Motor neuron (in vitro differentiated cells): ENCODE measurements at regions of chr14 and their contacts with region 1.

Region 1: GRCh38 chr14:68795597-68796417 is 2.9 kb upstream of the ZFP36L1 start:
- ATAC-seq: peak; percentile 24 to 80 (median 76)
- H3K4me3 ChIP-seq: peak overlapping the region; percentile 36 to 49 (median 44)
- H3K27ac ChIP-seq: peak overlapping the region; percentile 82 to 86
- H3K4me1 ChIP-seq: peaks cover 11 to 26% of the 10 kb centered on the region in 2 donors

Region 2: GRCh38 chr14:68268197-68268596 is 527.6 kb before region 1 on chr14:
- in situ Hi-C with region 1: loop called in 1 of 9 experiments (anchors 25 kb)
- ATAC-seq: no peak
- H3K4me3 ChIP-seq: no peak overlapping the region
- H3K27ac ChIP-seq: no peak overlapping the region
- H3K4me1 ChIP-seq: peaks cover 8 to 10% of the 10 kb centered on the region in 2 donors

Region 3: DNA sequence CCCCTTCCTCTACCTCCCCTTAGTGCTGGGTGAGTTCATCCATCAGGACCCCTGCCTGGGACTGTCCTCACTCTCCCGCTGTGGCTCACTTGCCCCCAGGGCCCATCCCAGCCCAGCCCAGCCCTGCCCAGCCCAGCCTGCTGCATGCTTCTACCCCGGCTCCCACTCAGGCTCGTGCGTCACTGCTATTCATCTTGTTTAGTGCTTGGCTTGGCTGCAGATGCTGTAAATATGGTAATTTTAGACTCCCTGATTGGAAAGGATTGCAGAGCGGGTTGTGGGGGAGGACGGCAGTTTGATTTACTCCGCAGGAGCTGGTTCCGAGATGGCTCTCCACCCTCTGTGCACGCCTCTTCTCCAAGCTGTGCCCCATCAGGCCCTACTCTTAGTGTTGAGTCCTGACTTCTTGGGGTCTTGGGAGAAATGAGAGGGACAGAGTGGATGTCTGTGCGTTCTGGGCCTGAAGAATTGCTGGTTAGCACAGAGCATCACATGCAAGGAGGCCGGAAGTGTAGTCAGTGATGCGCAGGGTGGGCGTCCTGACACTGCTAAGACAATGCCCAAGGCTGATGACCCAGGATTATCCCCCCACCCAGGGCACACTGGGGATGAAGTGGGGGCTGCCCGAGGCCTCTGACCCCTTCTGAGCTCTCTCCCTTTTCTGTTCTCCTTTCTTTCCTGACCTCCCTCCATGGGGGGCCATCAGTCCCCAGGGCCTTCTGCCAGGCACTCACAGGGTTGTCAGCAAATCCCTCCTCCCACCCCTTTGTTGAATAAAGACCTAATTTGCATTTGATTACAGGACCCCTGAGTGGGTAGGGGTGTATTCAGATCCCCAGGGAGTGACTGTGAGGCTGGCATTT is 247.4 kb before region 1 on chr14:
- in situ Hi-C with region 1: loop called in 1 of 9 experiments (anchors 25 kb)
- ATAC-seq: peak; percentile 79 to 97 (median 95)
- H3K4me3 ChIP-seq: peak overlapping the region in 1 of 5 donors; percentile 1
- H3K27ac ChIP-seq: peak overlapping the region; percentile 71 to 91
- H3K4me1 ChIP-seq: peaks cover 40 to 43% of the 10 kb centered on the region in 2 donors